ENCODE measurements at regions of chr16 and their contacts with region 1.

Region 1: DNA sequence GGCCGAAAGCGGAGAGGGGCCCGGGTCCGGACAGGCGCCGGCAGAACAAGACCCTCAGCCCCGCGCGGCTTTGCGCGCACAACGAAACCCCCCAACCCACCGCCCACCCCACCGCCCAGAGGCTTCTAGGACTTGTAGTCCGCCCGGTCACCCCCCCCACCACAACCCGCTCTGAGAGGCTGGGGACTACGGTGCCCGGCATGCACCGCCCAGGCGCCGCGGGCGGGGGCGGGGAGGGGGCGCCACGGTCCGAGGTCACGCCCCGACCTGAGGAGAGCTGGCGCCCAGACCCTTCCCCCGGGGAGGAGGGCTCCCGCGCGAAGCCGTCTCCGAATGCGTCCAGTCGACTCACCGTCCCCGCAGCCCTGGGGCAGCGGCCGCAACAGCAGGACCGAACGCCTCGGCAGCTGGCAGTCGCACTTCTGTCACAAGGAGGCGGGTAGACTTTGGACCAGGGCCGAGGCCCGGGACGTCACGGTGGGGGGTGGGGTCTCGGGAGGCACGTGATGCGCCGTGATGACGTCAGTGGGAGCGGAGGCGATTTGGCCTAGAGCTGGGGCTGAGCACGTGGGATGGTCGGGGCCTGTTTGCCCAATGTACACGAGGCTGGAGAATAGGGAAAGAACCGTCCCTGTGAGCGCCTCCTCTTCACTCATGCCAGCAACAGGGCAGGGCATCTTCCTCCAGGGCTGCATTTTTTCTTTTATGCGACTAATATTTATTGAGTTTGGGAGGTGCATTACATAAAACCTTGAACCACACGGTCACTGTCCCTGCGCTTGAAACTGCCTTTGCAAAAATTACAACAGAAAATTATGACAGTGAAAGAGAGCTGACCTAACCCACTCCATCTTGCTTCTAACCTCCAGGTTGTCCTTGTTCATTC is at the start of gene CDIP1:
- DNase-seq: peak; percentile 82
- ATAC-seq: peak; percentile 92
- H3K4me3 ChIP-seq: peak within 1 kb of the TSS; percentile 70
- H3K27ac ChIP-seq: peak within 1 kb of the TSS; percentile 13; the same call in 1 of the 2 replicates
- H3K4me1 ChIP-seq: peaks cover 11% of the 10 kb centered on the region
- H3K27me3 ChIP-seq: no peaks in the 10 kb centered on the region; a peak in 1 of 4 replicates
- CTCF ChIP-seq: no peak
- EP300 ChIP-seq: peak; percentile 19 to 46; a peak in 1 of 4 replicates
- POLR2A ChIP-seq: peak; percentile 99
- RAD21 ChIP-seq: no peak
- polyA plus RNA-seq, gene CDIP1: 6.1 to 7.2 TPM

Region 2: GRCh38 chr16:4593069-4593468 is 54.5 kb after region 1 on chr16:
- CTCF ChIA-PET with region 1: no interaction called
- POLR2A ChIA-PET with region 1: no interaction called
- RAD21 ChIA-PET with region 1: no interaction called
- SMC1A ChIA-PET with region 1: no interaction called
- in situ Hi-C with region 1: loop called (anchors 10 kb)
- intact Hi-C with region 1: no loop called
- DNase-seq: no peak
- ATAC-seq: no peak
- H3K4me3 ChIP-seq: no peak overlapping the region
- H3K27ac ChIP-seq: no peak overlapping the region
- H3K4me1 ChIP-seq: no peaks in the 10 kb centered on the region
- H3K27me3 ChIP-seq: no peaks in the 10 kb centered on the region; a peak in 2 of 4 replicates
- CTCF ChIP-seq: no peak
- EP300 ChIP-seq: no peak
- POLR2A ChIP-seq: no peak
- RAD21 ChIP-seq: no peak

Measured in GM12878 (cell line).